ENCODE measurements at regions of chr7 and their contacts with region 1.

Region 1: GRCh38 chr7:137898839-137899721 is 52.3 kb upstream of the DGKI start:
- DNase-seq: peak; percentile 73 to 95
- H3K4me3 ChIP-seq: peak overlapping the region in 2 of 4 experiments; percentile 2 to 46; a peak in 3 of 8 replicates
- H3K27ac ChIP-seq: no peak overlapping the region; the same call in 1 of the 2 replicates
- H3K4me1 ChIP-seq: peaks cover 0 to 2% (median 0%) of the 10 kb centered on the region in 4 experiments; a peak in 3 of 7 replicates
- H3K27me3 ChIP-seq: no peaks in the 10 kb centered on the region
- CTCF ChIP-seq: peak; percentile 91 to 98 (median 96)
- EP300 ChIP-seq: no peak
- POLR2A ChIP-seq: no peak
- RAD21 ChIP-seq: peak; percentile 96

Region 2: DNA sequence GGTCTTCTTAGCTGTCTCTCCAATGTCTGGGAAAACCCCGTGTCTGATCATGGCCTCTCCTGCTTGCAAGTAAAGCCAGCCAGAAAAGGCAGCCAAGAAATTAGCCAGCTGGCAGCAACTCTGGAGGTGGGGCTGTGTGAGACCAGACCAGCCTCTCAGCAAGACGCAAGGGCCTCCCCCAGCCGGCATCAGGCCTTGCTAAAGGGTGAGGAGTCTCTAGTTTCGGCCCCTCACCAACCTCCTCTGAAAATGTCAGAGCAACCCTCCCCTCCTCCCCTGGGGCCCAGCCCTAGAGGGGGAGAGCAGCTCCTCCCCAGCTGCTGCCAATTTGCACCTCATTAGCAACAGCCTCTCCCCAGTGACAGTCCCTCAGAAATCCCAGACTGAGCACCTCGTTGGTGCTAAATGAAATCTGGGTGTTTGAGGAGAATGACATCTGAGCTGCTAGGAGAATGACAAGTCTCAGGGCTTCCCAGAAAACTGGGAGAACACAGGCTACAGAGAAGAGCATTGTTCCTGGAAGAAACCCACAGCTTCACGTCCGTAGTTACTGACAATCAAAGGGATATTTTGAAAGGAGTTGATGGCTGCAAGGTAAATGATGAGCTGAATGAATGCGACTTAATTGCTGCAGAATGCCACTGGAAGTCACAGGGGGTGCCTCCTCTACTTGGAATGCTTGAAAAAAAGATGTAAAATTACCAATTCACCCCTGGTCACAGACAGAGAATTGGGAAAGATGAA is 78.2 kb before region 1 on chr7:
- CTCF ChIA-PET with region 1: interaction called, 14 read pairs
- POLR2A ChIA-PET with region 1: no interaction called
- DNase-seq: peak in 1 of 2 experiments; percentile 59
- H3K4me3 ChIP-seq: peak overlapping the region in 2 of 4 experiments; percentile 7 to 14; a peak in 4 of 8 replicates
- H3K27ac ChIP-seq: no peak overlapping the region
- H3K4me1 ChIP-seq: peaks cover 7 to 15% (median 10%) of the 10 kb centered on the region in 4 experiments
- H3K27me3 ChIP-seq: no peaks in the 10 kb centered on the region
- CTCF ChIP-seq: no peak
- EP300 ChIP-seq: no peak
- POLR2A ChIP-seq: no peak
- RAD21 ChIP-seq: no peak

Region 3: GRCh38 chr7:137916980-137917645 is 18.0 kb after region 1 on chr7:
- CTCF ChIA-PET with region 1: interaction called, 14 read pairs
- POLR2A ChIA-PET with region 1: no interaction called
- DNase-seq: no peak
- H3K4me3 ChIP-seq: no peak overlapping the region
- H3K27ac ChIP-seq: no peak overlapping the region
- H3K4me1 ChIP-seq: peaks cover 0 to 13% (median 7%) of the 10 kb centered on the region in 4 experiments; a peak in 4 of 7 replicates
- H3K27me3 ChIP-seq: no peaks in the 10 kb centered on the region
- CTCF ChIP-seq: no peak
- EP300 ChIP-seq: no peak
- POLR2A ChIP-seq: no peak
- RAD21 ChIP-seq: no peak

Region 4: DNA sequence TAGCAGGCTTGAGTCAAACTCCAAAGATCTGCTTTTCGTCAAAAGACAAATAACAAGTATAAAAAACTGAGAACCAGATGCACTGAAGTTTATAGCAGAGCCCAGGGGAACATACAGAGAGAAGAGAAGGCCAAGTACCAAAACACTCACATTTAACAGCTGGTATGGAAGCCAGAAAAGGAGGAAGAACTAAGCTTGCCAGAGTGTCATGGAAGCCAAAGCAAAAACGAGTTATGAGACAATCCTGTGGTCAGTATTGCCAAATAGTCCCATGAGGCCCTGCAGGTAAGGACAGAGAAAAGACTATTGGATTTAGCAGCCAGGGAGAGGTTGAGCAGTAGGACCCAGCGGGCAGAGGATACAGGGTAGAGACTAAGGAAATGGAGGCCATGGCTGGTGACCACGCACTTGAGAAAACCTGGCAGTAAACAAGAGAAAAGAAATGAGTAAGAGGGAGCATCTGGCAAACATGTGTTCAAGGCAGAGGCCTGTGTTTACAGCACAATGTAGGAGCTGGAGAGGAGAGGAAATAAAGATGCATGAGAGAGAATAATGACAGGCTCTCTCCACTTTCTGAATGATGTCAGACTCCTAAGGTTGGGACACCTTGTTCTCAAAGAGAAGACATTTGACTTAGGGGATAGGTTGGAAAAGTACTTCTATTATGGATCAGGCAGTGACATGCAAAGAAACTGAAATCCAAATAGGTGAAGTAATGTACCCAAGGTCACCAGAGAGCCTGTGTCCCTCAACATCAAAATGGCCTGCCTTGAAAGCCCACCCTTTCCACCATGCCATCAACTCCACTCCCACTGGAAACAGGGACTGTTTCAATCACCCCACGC is 93.7 kb after region 1 on chr7:
- CTCF ChIA-PET with region 1: interaction called, 167 read pairs
- POLR2A ChIA-PET with region 1: no interaction called
- DNase-seq: no peak
- H3K4me3 ChIP-seq: no peak overlapping the region
- H3K27ac ChIP-seq: no peak overlapping the region
- H3K4me1 ChIP-seq: peaks cover 0 to 10% (median 0%) of the 10 kb centered on the region in 4 experiments; a peak in 3 of 7 replicates
- H3K27me3 ChIP-seq: no peaks in the 10 kb centered on the region
- CTCF ChIP-seq: no peak
- EP300 ChIP-seq: no peak
- POLR2A ChIP-seq: no peak
- RAD21 ChIP-seq: no peak

Region 5: GRCh38 chr7:138002096-138002827 is 103.2 kb after region 1 on chr7:
- CTCF ChIA-PET with region 1: interaction called, 167 read pairs
- POLR2A ChIA-PET with region 1: no interaction called
- DNase-seq: peak; percentile 98
- H3K4me3 ChIP-seq: peak overlapping the region; percentile 87 to 95 (median 92)
- H3K27ac ChIP-seq: no peak overlapping the region
- H3K4me1 ChIP-seq: peaks cover 0 to 11% (median 8%) of the 10 kb centered on the region in 4 experiments; a peak in 5 of 7 replicates
- H3K27me3 ChIP-seq: no peaks in the 10 kb centered on the region
- CTCF ChIP-seq: peak; percentile 68 to 80 (median 74)
- EP300 ChIP-seq: no peak; a peak in 1 of 3 replicates
- POLR2A ChIP-seq: no peak
- RAD21 ChIP-seq: peak; percentile 55 to 65

Region 6: GRCh38 chr7:138015096-138015495 is 116.0 kb after region 1 on chr7:
- CTCF ChIA-PET with region 1: interaction called, 26 read pairs
- POLR2A ChIA-PET with region 1: no interaction called
- DNase-seq: no peak
- H3K4me3 ChIP-seq: no peak overlapping the region
- H3K27ac ChIP-seq: no peak overlapping the region
- H3K4me1 ChIP-seq: peaks cover 0 to 5% (median 4%) of the 10 kb centered on the region in 4 experiments; a peak in 4 of 7 replicates
- H3K27me3 ChIP-seq: no peaks in the 10 kb centered on the region
- CTCF ChIP-seq: no peak
- EP300 ChIP-seq: no peak
- POLR2A ChIP-seq: no peak
- RAD21 ChIP-seq: no peak

Measured in H1 (cell line).